ENCODE measurements at regions of chr2 and their contacts with region 1.

Region 1: DNA sequence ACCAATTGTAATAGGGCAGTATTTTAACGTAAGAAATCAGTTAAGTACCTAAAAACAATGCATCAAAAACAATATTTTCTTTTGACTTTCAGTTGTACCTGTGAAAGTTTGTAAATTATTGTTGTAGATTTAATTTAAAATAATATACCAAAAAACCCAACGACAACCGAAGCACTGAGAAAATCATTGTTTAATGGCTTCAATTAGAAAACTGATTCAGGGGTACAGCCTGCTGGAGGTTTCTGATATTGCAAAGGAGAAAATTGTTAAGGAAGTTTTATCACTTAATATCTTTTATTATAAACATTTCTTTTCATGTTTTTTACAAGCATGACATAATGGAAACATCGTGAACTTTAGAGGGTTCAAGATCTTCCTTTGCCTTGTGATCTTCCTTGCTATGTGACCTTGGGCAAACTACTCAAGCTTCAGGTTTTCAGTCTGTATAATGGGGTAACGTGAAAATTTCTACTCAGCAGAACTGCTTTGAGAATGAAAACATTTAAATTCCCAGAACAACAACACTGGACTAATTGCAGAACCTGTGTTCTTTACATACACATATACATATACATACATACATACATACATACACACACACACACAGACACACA is 76.3 kb upstream of the GLS start:
- DNase-seq: no peak
- H3K4me3 ChIP-seq: no peak overlapping the region
- H3K27ac ChIP-seq: no peak overlapping the region
- H3K4me1 ChIP-seq: no peaks in the 10 kb centered on the region
- H3K27me3 ChIP-seq: no peaks in the 10 kb centered on the region
- CTCF ChIP-seq: peak; percentile 21 to 83 (median 67)
- POLR2A ChIP-seq: no peak

Region 2: GRCh38 chr2:190382851-190383250 is 421.4 kb before region 1 on chr2:
- intact Hi-C with region 1: loop called (anchors 10 kb)
- DNase-seq: peak; percentile 64
- H3K4me3 ChIP-seq: no peak overlapping the region
- H3K27ac ChIP-seq: no peak overlapping the region
- H3K4me1 ChIP-seq: no peaks in the 10 kb centered on the region
- H3K27me3 ChIP-seq: no peaks in the 10 kb centered on the region
- CTCF ChIP-seq: peak; percentile 27 to 78 (median 60)
- POLR2A ChIP-seq: no peak

Region 3: DNA sequence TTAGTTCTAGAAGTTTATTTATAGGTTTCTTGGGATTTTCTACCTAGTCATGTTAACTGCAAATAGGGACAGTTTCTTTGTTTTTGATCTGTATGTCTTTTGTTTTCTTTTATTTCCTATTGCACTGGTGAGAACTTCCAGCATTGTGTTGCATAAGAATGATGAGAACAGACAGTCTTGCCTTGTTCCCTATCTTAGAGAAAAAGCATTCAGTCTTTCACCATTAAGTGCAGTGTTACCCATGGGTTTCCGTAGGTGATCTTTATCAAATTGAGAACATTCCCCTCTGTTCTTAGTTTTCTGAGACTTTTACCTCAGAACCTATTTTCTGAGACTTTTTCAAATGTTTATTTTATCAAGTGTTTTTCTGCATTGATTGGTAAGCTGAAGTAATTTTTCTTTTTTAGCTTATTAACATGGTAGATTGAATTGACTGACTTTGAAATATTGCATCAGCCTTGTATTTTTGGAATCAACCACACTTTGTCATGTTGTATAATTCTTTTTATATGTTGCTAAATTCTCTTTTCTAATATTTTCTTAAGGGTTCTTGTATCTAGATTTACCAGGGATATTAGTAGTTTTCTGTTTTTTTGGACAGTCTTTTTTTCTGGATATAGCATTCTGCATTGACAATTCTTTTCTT is 378.9 kb before region 1 on chr2:
- intact Hi-C with region 1: no loop called
- DNase-seq: no peak
- H3K4me3 ChIP-seq: no peak overlapping the region
- H3K27ac ChIP-seq: no peak overlapping the region
- H3K4me1 ChIP-seq: no peaks in the 10 kb centered on the region
- H3K27me3 ChIP-seq: no peaks in the 10 kb centered on the region
- CTCF ChIP-seq: no peak
- POLR2A ChIP-seq: no peak

Region 4: GRCh38 chr2:190534310-190535120 is 269.8 kb before region 1 on chr2 and contains the start of gene NEMP2:
- intact Hi-C with region 1: loop called (anchors 10 kb)
- DNase-seq: peak; percentile 54
- H3K4me3 ChIP-seq: peak within 1 kb of the TSS; percentile 72 to 76
- H3K27ac ChIP-seq: peak within 1 kb of the TSS; percentile 90 to 94
- H3K4me1 ChIP-seq: no peaks in the 10 kb centered on the region
- H3K27me3 ChIP-seq: no peaks in the 10 kb centered on the region
- CTCF ChIP-seq: no peak
- POLR2A ChIP-seq: peak; percentile 54
- total RNA-seq, gene NEMP2: 4.6 to 14.0 TPM

Measured in prostate gland (tissue), 2 donors.